Caco-2 (cell line): ENCODE measurements at regions of chr19 and their contacts with region 1.

Region 1: GRCh38 chr19:46634045-46634655 is 1.9 kb downstream of the GNG8 start:
- DNase-seq: peak; percentile 96 to 97
- H3K4me3 ChIP-seq: peak overlapping the region; percentile 34
- H3K4me3 Mint-ChIP-seq: peak overlapping the region; percentile 66
- H3K27ac Mint-ChIP-seq: peak overlapping the region; percentile 49
- H3K4me1 ChIP-seq: peaks cover 9% of the 10 kb centered on the region
- H3K4me1 Mint-ChIP-seq: peaks cover 8% of the 10 kb centered on the region
- H3K27me3 ChIP-seq: no peaks in the 10 kb centered on the region; the same call in 1 of the 2 replicates
- H3K27me3 Mint-ChIP-seq: peaks cover 12% of the 10 kb centered on the region
- CTCF ChIP-seq: no peak

Region 2: DNA sequence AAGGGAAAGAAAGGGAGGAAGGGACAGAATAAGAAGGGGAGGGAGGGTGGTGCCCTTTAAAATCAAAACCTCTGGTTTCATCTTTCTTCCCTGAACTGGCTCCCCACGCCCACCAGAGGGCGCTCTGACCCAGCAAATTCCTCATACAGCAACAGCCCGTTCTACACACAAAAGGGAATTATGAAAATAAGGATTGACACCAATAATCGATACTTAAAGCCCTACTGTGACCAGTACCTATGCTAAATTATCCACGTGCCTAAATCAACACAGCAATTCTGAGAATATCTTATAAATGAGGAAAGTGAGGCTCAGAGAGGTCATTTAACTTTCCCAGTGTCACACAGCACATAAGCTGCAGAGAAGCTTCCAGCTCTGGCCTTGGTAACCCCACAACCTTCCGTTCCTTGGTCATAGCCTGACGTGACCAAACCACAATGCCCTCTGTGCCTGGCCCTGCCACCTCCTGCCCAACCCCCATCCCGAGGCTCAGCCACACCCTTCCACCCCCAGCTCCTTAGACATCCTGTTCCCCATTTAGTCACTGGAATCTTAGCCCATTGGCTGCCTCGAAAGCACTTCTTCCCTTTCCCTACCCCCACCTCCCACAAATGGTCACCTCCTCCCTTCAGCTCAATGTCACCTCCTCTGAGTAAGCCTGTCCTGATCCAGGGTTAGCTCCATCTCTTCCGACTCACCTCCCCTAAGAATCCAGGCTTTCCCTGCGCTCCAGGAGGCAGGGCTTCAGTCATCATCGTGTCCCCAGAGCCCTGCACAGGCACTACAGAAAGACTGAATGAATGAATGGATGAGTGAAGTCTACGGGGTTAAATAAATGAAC is 104.3 kb before region 1 on chr19:
- CTCF ChIA-PET with region 1: no interaction called
- POLR2A ChIA-PET with region 1: no interaction called
- intact Hi-C with region 1: no loop called
- DNase-seq: peak in 1 of 2 experiments; percentile 77
- H3K4me3 ChIP-seq: no peak overlapping the region
- H3K4me3 Mint-ChIP-seq: no peak overlapping the region
- H3K27ac Mint-ChIP-seq: no peak overlapping the region
- H3K4me1 ChIP-seq: no peaks in the 10 kb centered on the region
- H3K4me1 Mint-ChIP-seq: no peaks in the 10 kb centered on the region
- H3K27me3 ChIP-seq: no peaks in the 10 kb centered on the region
- H3K27me3 Mint-ChIP-seq: peaks cover 9% of the 10 kb centered on the region
- CTCF ChIP-seq: peak; percentile 94 to 97

Region 3: DNA sequence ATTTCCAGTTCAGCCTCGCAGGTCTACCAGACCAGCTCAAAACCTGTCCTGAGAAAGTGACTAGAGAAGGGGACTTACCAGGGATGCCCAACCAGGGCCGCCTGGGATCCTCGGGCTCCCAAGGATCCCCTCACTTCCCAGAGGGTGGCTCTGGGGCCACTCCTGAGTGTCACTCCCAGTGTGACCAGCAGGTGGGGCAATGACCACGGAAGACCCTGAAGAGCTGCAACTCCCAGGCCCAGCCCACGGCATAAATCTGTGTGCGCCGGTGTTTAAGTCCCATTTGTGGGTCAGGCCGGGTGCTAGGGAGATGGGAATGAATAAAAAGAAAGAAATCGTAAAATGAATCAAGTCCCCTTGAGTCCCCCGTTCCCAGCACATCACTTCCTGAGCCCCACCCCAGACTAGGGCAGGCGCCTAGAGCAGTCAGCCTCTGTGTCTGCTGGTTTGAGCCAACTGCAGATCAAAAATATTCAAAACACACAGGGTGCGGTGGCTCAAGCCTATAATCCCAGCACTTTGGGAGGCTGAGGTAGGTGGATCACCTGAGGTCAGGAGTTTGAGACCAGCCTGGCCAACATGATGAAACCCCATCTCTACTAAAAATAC is 19.9 kb before region 1 on chr19:
- CTCF ChIA-PET with region 1: interaction called, 11 read pairs
- POLR2A ChIA-PET with region 1: interaction called, 5 read pairs
- intact Hi-C with region 1: no loop called
- DNase-seq: peak; percentile 87 to 90
- H3K4me3 ChIP-seq: no peak overlapping the region
- H3K4me3 Mint-ChIP-seq: no peak overlapping the region
- H3K27ac Mint-ChIP-seq: no peak overlapping the region
- H3K4me1 ChIP-seq: no peaks in the 10 kb centered on the region
- H3K4me1 Mint-ChIP-seq: peaks cover 6% of the 10 kb centered on the region
- H3K27me3 ChIP-seq: no peaks in the 10 kb centered on the region
- H3K27me3 Mint-ChIP-seq: no peaks in the 10 kb centered on the region
- CTCF ChIP-seq: peak; percentile 93 to 95

Region 4: GRCh38 chr19:46714444-46715106 is 80.4 kb after region 1 on chr19:
- CTCF ChIA-PET with region 1: interaction called, 5 read pairs
- POLR2A ChIA-PET with region 1: interaction called, 15 read pairs
- intact Hi-C with region 1: no loop called
- DNase-seq: peak in 1 of 2 experiments; percentile 34
- H3K4me3 ChIP-seq: peak overlapping the region; percentile 88
- H3K4me3 Mint-ChIP-seq: peak overlapping the region; percentile 99
- H3K27ac Mint-ChIP-seq: peak overlapping the region; percentile 95
- H3K4me1 ChIP-seq: peaks cover 18% of the 10 kb centered on the region
- H3K4me1 Mint-ChIP-seq: peaks cover 14% of the 10 kb centered on the region
- H3K27me3 ChIP-seq: no peaks in the 10 kb centered on the region
- H3K27me3 Mint-ChIP-seq: no peaks in the 10 kb centered on the region
- CTCF ChIP-seq: no peak